Naive thymus-derived CD8-positive, alpha-beta T cell (primary cell): ENCODE measurements at regions of chr14 and their contacts with region 1.

Region 1: DNA sequence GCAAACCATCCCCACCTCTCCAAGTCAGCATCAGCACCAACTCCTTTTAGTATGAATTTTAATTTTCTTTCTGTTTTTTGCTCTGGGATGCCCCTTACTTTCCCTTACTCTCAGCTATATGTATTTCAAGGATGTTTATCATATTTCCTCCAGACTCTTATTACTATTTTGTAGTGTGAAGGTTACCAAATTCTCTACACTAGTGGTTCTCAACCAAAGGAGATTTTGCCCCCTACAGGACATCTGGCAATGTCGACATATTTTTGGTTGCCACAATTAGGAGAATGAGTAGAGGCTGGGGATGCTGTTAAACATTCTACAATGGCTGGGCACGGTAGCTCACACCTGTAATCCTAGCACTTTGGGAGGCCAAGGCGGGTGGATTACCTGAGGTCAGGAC is 29.1 kb upstream of the SOS2 start:
- DNase-seq: peak in 3 of 10 donors; percentile 11 to 38 (median 29)
- ATAC-seq: peak; percentile 60 to 65
- H3K4me3 Mint-ChIP-seq: no peak overlapping the region
- H3K27ac Mint-ChIP-seq: no peak overlapping the region
- H3K4me1 Mint-ChIP-seq: peaks cover 0 to 2% (median under 1%) of the 10 kb centered on the region in 4 donors
- H3K27me3 Mint-ChIP-seq: no peaks in the 10 kb centered on the region

Region 2: DNA sequence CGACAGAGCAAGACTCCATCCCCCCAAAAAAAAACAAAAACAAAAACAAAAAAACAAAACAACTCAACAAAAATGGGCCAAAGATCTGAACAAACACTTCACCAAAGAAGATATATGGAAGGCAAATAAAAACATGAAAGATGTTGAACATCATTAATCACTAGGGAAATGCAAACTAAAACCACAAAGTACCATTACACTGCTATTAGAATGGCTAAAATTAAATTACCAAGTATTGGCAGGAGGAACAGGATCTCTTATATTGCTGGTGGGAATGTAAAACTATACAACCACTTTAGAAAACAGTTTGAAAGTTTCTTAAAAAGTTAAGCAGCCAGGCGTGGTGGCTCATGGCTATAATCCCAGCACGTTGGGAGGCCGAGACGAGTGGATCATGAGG is 42.0 kb before region 1 on chr14:
- POLR2A ChIA-PET with region 1: interaction called, 10 read pairs
- DNase-seq: no peak
- ATAC-seq: no peak
- H3K4me3 Mint-ChIP-seq: no peak overlapping the region
- H3K27ac Mint-ChIP-seq: no peak overlapping the region
- H3K4me1 Mint-ChIP-seq: peaks cover 17 to 48% (median 44%) of the 10 kb centered on the region in 4 donors
- H3K27me3 Mint-ChIP-seq: no peaks in the 10 kb centered on the region

Region 3: DNA sequence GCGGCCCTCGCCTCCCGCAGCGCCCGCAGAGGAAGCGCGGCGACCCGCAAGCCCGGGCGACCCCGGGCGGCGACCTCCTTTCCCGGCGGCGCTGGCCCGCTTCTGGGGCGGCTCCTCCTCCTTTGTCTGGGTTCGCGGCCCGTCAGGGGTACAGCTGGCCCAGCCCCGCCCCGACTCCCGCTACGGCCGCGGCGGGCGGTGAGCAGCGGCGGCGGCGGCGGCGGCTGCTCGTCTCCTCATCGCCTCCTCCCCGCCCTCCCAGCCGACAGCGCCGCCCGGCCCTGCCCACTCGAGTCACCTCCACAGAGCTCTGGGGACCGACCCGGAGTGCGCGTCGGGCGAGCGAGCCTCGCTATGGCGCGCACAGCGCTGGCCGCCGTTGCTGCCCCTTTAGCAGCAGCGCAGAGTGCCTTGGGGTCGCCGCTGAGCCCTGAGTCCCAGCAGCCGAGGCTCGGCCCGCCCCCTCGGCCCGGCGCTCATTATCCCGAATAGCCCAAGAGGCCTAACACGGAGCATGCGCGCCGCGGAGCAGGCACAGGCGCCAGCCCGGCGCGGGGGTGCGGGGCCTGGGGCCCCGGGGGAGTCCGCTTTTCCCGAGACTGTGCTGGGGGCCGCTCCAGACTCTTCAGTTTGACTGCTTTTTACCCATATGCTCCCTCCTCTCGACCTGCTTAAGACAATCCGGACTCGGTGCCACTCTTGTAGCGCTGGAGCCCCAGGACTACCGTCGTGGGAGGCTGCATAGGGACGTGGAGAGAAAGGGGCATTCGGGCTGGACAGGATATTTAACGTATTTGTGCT is 28.8 kb before region 1 on chr14 and contains the start of gene SOS2:
- POLR2A ChIA-PET with region 1: no interaction called
- DNase-seq: peak; percentile 68 to 90 (median 76)
- ATAC-seq: peak; percentile 79 to 84
- H3K4me3 Mint-ChIP-seq: peak within 1 kb of the TSS; percentile 82 to 96 (median 90)
- H3K27ac Mint-ChIP-seq: peak within 1 kb of the TSS; percentile 77 to 96 (median 94)
- H3K4me1 Mint-ChIP-seq: peaks cover 10 to 46% (median 31%) of the 10 kb centered on the region in 4 donors
- H3K27me3 Mint-ChIP-seq: no peaks in the 10 kb centered on the region
- polyA plus RNA-seq, gene SOS2: 6.0 to 15.0 (median 13.4) TPM